Motor neuron (in vitro differentiated cells): ENCODE measurements at regions of chr5 and their contacts with region 1.

Region 1: DNA sequence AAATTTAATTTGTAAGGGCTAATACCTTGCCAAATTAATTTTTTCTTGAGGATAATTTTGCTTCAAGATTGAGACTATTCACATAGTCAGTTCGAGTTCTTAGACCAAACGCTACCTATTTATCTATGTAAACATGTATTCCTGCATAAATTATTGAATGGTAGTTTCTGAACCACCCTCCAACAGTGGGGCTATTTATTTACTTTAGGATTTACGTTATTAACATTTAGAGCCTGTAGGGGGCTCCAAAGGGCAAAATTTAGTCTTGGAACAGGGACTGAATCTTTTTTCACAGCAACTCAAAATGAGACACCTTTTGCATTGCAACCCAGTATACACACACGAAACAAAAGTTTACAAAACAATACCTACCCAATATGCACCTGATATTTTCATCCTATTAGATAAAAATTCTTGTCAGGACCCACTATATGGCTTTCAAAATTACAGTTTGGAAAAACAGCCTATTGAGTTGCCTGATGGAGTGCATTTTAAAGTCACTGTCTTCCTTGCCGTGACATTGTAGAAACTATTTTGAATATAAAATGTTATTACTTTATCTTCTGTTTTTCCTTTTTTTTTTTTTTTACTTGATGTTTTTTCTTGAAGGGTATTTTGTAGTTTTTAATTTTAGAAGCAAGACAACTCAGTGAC is 47.1 kb upstream of the POU4F3 start:
- ATAC-seq: peak in 5 of 8 experiments; percentile 21 to 86 (median 72)
- H3K4me3 ChIP-seq: no peak overlapping the region
- H3K27ac ChIP-seq: no peak overlapping the region
- H3K4me1 ChIP-seq: no peaks in the 10 kb centered on the region

Region 2: GRCh38 chr5:146390469-146390868 is 98.9 kb after region 1 on chr5:
- in situ Hi-C with region 1: loop called in 1 of 9 experiments (anchors 10 kb)
- ATAC-seq: no peak
- H3K4me3 ChIP-seq: no peak overlapping the region
- H3K27ac ChIP-seq: no peak overlapping the region
- H3K4me1 ChIP-seq: no peaks in the 10 kb centered on the region

Region 3: GRCh38 chr5:146426853-146427618 is 135.5 kb after region 1 on chr5:
- in situ Hi-C with region 1: loop called in 2 of 9 experiments (anchors 10 to 25 kb)
- ATAC-seq: peak in 5 of 8 experiments; percentile 46 to 80 (median 64)
- H3K4me3 ChIP-seq: no peak overlapping the region
- H3K27ac ChIP-seq: no peak overlapping the region
- H3K4me1 ChIP-seq: peaks cover 0 to 4% of the 10 kb centered on the region in 2 donors

Region 4: GRCh38 chr5:146446853-146447733 is 155.5 kb after region 1 on chr5 and contains the start of gene TCERG1:
- in situ Hi-C with region 1: loop called in 1 of 9 experiments (anchors 25 kb)
- ATAC-seq: peak; percentile 89 to 92 (median 91)
- H3K4me3 ChIP-seq: peak within 1 kb of the TSS; percentile 79 to 97 (median 92)
- H3K27ac ChIP-seq: peak within 1 kb of the TSS; percentile 96 to 98
- H3K4me1 ChIP-seq: peaks cover 3 to 11% of the 10 kb centered on the region in 2 donors
- total RNA-seq, gene TCERG1: 50.0 to 152 (median 86.1) TPM

Region 5: DNA sequence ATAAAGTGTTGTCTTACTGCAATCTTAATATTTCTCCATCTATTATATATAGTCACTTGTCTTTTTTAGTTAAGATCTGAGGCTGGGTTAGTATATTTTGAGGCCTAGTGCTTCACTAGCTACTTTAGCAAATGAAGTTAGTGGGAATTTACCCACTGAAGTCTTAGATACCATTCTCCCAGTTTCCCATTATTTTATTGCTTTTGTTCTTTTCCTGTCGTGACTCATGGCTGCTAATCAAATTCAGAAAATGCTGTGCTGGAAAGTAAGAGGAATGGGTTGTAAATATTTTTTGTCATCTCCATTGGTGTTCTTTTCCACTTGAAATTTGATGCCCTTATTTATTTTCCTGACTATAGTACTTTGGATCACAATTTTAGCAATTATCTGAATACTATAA is 169.8 kb after region 1 on chr5:
- in situ Hi-C with region 1: no loop called
- ATAC-seq: peak in 2 of 8 experiments; percentile 34 to 51
- H3K4me3 ChIP-seq: no peak overlapping the region
- H3K27ac ChIP-seq: no peak overlapping the region
- H3K4me1 ChIP-seq: no peaks in the 10 kb centered on the region

Region 6: DNA sequence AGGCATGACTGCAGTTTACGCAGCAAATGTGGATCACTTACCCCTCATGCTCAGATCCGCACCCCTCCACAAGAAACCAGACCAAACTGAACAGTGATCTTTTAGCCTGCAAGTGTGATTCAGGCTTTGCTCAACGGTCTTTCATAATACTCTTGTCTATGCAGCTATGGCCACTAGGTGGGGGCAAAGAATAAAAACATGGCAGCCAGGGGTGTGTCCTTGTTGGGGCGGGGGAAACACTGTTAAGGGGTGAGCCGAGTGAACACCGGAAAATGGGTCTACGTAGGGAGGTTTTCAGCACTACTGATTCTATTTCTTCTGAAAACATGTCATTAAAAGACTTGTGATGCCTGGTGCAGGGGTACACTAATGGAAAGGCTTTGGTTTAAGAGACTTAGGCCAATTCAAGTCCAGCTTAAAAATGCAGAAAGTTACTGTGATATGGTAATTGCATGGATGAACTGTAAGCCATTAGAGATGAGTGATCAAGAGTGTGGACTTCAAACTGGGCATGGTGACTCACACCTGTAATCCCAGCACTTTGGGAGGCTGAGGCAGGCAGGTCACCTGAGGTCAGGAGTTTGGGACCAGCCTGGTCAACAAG is 274.3 kb after region 1 on chr5:
- in situ Hi-C with region 1: no loop called
- ATAC-seq: peak; percentile 70 to 96 (median 89)
- H3K4me3 ChIP-seq: no peak overlapping the region
- H3K27ac ChIP-seq: no peak overlapping the region
- H3K4me1 ChIP-seq: peaks cover 5 to 10% of the 10 kb centered on the region in 2 donors

Region 7: DNA sequence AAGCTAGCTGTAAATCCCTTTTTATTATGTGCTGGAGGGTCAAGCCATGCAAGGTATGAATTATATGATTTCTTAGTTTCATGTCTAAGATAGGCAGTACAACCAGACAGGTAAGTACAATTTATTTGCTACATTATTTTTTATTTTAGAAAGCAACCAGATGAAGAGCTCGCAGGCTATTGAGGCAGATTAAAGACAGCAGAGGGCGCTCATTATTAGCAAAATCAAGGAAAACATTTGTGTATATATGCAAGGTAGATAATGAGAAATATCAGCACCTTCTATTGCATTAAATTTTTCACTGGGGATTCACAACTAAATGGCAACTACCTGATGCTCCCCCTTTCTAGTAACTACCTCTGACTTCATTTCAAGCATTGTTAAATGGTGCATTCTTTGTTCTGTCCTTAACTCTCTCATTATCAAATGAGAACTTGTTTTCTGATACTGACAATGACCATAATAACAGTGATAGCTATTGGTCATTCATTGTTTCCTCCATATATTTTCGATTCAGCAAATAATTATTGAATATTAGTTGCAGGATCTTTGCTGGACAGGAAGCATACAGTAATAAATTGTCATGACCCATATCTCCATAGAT is 1595.6 kb after region 1 on chr5:
- in situ Hi-C with region 1: no loop called
- ATAC-seq: peak in 4 of 8 experiments; percentile 35 to 59 (median 38)
- H3K4me3 ChIP-seq: no peak overlapping the region
- H3K27ac ChIP-seq: no peak overlapping the region
- H3K4me1 ChIP-seq: no peaks in the 10 kb centered on the region